PC-9 (cell line): ENCODE measurements at regions of chr17 and their contacts with region 1.

Region 1: GRCh38 chr17:19513897-19514488 is 19.7 kb upstream of the SLC47A1 start:
- DNase-seq: peak; percentile 58 to 75
- H3K4me3 ChIP-seq: no peak overlapping the region
- H3K27ac ChIP-seq: no peak overlapping the region
- H3K4me1 ChIP-seq: peaks cover 7% of the 10 kb centered on the region; the same call in 1 of the 2 replicates
- H3K27me3 ChIP-seq: no peaks in the 10 kb centered on the region
- CTCF ChIP-seq: peak; percentile 98

Region 2: DNA sequence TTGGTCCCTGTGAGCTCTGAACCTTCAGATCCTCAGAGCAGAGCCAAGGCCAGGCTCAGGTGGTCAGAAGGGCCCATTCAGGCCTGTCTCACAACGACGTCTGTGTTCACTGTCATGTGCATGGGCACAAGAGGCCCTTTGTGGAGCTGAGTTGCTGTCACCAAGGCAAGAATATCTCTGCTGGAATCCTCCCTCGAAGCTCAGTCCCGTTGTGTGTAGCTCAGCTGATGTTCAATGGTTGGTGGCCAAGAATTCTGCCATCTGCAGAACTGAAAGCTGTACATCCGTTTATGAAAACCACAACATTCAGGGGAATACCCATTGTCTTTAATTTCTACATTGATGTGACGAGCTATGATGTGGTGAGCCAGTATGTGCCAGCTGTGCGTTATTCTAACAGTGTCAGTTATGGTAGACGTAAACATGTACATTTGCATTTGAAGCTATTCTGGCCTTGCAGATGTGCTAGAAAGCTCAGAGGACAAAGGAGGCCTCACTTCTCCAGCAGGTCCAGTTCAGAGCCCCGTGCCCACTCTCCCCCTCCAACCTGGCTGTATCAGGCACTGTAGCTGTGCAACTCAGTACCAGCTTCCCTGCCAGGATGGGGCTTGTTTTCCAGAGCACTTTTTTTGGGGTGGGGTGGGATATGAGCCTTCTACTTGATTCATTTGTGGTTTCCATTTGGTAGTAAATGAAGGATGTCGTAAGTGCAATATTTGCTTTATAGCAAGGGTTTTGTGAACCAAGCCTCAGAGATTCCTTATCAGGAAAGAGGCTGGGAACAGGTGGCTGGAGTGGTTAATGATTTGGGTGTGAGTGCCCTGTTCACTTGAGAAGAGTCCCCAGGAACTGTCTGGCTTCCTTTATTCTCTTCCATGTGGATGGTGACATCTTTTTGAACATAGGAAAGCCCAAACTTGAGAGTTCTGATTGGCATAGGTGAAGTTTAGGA is 207.6 kb before region 1 on chr17:
- CTCF ChIA-PET with region 1: no interaction called
- POLR2A ChIA-PET with region 1: no interaction called
- intact Hi-C with region 1: no loop called
- DNase-seq: peak in 1 of 2 experiments; percentile 46
- H3K4me3 ChIP-seq: no peak overlapping the region
- H3K27ac ChIP-seq: no peak overlapping the region
- H3K4me1 ChIP-seq: 0 out of 2 replicates have a peak, but pooled peaks cover 1% of the 10 kb centered on the region
- H3K27me3 ChIP-seq: no peaks in the 10 kb centered on the region
- CTCF ChIP-seq: no peak

Region 3: DNA sequence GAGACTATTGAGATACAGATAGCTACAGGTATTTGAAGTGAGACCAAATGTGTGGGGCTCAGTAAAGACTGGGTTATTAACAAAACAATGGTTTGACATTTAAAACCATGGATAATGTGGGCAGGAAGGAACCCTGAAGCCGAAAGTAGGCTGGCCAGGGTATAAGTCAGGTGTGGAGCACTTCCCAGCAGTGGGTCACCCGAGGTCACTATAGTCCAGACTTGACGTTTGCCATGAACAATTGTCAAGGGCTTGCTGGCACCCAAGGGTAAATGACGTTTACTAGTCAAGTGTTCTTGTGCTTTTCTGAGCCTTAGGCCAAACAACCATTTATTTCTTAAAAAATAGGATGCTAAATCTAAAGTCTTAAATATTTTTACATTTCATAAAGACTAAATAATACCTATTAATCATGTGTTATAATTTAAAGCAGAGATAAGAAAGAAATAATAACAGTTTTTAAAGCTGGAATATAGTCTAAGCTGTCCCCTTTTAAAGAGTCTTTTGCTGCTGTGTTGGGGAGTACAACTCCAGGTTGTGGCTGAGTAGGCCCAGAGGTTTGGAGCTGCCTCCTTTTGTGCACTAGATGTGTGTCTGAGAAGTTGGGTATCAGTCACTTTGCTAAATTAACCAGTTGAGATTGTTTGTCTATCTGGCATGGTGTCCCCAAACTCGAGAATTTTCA is 150.3 kb after region 1 on chr17:
- CTCF ChIA-PET with region 1: no interaction called
- POLR2A ChIA-PET with region 1: no interaction called
- intact Hi-C with region 1: loop called (anchors 5 kb)
- DNase-seq: no peak
- H3K4me3 ChIP-seq: no peak overlapping the region
- H3K27ac ChIP-seq: no peak overlapping the region
- H3K4me1 ChIP-seq: peaks cover 22% of the 10 kb centered on the region
- H3K27me3 ChIP-seq: no peaks in the 10 kb centered on the region
- CTCF ChIP-seq: no peak

Region 4: GRCh38 chr17:19718604-19719354 is 204.8 kb after region 1 on chr17:
- CTCF ChIA-PET with region 1: no interaction called
- POLR2A ChIA-PET with region 1: interaction called, 4 read pairs
- intact Hi-C with region 1: loop called (anchors 2 kb)
- DNase-seq: peak in 1 of 2 experiments; percentile 50
- H3K4me3 ChIP-seq: no peak overlapping the region
- H3K27ac ChIP-seq: peak overlapping the region; percentile 66
- H3K4me1 ChIP-seq: peaks cover 87% of the 10 kb centered on the region
- H3K27me3 ChIP-seq: no peaks in the 10 kb centered on the region
- CTCF ChIP-seq: peak; percentile 52

Region 5: DNA sequence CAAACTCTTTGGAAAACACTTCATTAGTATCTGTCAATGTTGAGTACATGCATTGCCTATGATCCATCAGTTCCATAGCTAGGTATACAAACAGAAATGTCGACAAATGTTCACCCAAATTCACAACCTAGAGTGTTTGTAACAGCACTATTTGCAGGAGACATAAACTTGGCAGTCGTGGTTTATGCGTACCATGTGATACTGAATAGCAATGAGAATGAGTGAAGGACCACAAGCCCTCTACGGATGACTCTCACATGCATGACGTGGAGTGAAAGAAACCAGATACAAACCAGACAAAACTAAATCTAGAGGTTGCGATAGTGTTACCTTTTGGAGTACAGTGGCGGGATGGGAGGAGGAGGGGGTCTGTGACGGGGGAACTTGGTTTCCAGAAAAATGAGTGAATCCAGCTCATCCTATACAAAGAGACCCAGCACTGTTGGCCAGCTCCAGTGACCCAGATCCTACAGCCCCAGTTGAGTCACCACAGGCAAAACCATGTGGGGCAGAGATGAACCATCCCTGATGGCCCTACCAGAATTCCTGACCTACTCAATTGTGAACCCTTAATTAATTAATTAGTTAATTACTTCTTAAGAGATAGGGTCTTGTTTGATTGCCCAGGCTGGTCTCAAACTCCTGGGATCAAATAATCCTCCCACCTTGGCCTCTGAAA is 369.7 kb after region 1 on chr17:
- CTCF ChIA-PET with region 1: interaction called, 14 read pairs
- POLR2A ChIA-PET with region 1: no interaction called
- intact Hi-C with region 1: no loop called
- DNase-seq: no peak
- H3K4me3 ChIP-seq: no peak overlapping the region
- H3K27ac ChIP-seq: no peak overlapping the region
- H3K4me1 ChIP-seq: no peaks in the 10 kb centered on the region
- H3K27me3 ChIP-seq: no peaks in the 10 kb centered on the region
- CTCF ChIP-seq: no peak